ENCODE measurements at regions of chr10 and their contacts with region 1.

Region 1: DNA sequence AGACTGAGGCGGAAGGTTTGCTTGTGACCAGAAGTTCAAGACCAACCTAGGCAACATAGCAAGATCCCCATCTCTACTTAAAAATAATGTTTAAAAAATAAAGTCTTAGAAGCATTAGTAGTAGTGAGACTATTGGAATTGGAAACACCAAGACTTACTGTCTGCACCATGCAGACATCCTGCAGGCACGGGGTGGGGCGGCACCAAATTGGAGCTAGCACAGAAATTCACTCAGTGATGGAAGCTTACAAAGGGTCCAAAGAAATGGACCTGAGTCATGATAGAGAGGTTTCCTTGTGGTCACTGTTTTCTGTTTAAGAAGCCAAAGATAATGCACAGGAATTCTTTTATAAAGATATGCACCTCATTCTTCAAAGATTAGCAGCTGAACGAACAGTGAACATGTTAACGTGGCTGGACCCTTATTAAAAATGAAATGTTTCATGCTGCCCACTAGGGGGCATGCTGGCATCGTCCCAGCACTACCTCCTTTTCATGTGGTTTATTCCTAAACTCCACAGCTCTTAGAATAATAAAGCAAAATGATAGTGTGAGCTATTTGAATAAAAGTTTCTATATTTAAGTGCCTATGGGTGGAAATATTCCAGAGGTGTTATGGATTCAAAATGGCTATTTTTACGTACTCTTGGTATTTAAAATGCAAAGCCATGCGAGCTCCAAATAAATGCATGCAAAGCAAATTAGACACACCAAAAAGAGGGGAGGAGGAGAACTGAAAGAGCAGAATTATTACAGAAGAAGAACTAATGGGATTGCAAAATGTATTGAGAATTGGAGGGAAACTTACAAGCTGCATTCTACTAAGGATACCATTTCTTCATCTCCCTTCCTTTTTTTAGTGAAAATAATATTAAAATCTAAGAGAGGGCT is 28.6 kb downstream of the PDSS1 start:
- DNase-seq: peak in 31 of 35 experiments; percentile 12 to 75 (median 35)
- ATAC-seq: peak in 3 of 4 experiments; percentile 42 to 58 (median 52)
- H3K4me3 ChIP-seq: no peak overlapping the region
- H3K4me3 Mint-ChIP-seq: no peak overlapping the region
- H3K27ac ChIP-seq: no peak overlapping the region
- H3K27ac Mint-ChIP-seq: no peak overlapping the region
- H3K4me1 ChIP-seq: peaks cover 0 to 12% of the 10 kb centered on the region in 2 experiments
- H3K4me1 Mint-ChIP-seq: peaks cover 5 to 13% (median 13%) of the 10 kb centered on the region in 3 donors
- H3K27me3 ChIP-seq: no peaks in the 10 kb centered on the region
- H3K27me3 Mint-ChIP-seq: no peaks in the 10 kb centered on the region

Region 2: DNA sequence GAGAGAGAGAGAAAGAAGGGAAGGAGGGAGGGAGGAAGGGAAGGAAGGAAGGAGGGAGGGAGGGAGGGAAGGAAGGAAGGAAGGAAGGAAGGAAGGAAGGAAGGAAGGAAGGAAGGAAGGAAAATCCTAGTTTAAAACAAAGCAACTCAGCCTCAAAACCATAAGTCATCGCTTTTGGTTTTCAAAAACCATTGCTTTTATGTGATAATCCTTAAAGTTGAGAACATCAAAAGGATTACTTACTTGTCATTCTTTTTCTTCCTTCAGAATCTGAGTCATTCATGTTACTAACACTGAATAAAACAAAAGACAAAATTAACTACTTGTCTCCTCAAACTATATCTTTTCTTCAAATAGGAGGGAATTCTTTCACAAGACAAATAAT is 50.2 kb before region 1 on chr10:
- CTCF ChIA-PET with region 1: interaction called, 4 to 10 read pairs
- POLR2A ChIA-PET with region 1: no interaction called
- DNase-seq: no peak
- ATAC-seq: no peak
- H3K4me3 ChIP-seq: no peak overlapping the region
- H3K4me3 Mint-ChIP-seq: no peak overlapping the region
- H3K27ac ChIP-seq: no peak overlapping the region
- H3K27ac Mint-ChIP-seq: peak overlapping the region in 1 of 2 donors; percentile 22
- H3K4me1 ChIP-seq: no peaks in the 10 kb centered on the region
- H3K4me1 Mint-ChIP-seq: peaks cover 0 to 2% (median 0%) of the 10 kb centered on the region in 3 donors
- H3K27me3 ChIP-seq: peaks cover 0 to 3% of the 10 kb centered on the region in 2 experiments
- H3K27me3 Mint-ChIP-seq: peaks cover 0 to 2% of the 10 kb centered on the region in 2 donors

Region 3: GRCh38 chr10:26697163-26697921 is 28.7 kb before region 1 on chr10 and contains the start of gene PDSS1:
- CTCF ChIA-PET with region 1: interaction called in 1 of 2 experiments, 10 read pairs
- POLR2A ChIA-PET with region 1: no interaction called
- DNase-seq: peak; percentile 20 to 70 (median 43)
- ATAC-seq: peak; percentile 81 to 85 (median 84)
- H3K4me3 ChIP-seq: peak within 1 kb of the TSS; percentile 92 to 93
- H3K4me3 Mint-ChIP-seq: peak within 1 kb of the TSS; percentile 92 to 96 (median 95)
- H3K27ac ChIP-seq: peak within 1 kb of the TSS; percentile 72
- H3K27ac Mint-ChIP-seq: peak within 1 kb of the TSS; percentile 95 to 97
- H3K4me1 ChIP-seq: peaks cover 5 to 19% of the 10 kb centered on the region in 2 experiments
- H3K4me1 Mint-ChIP-seq: peaks cover 29 to 33% (median 31%) of the 10 kb centered on the region in 3 donors
- H3K27me3 ChIP-seq: no peaks in the 10 kb centered on the region
- H3K27me3 Mint-ChIP-seq: peaks cover 0 to 2% of the 10 kb centered on the region in 2 donors
- total RNA-seq, gene PDSS1: 2.1 to 6.2 (median 2.9) TPM

Region 4: GRCh38 chr10:26860443-26861204 is 134.5 kb after region 1 on chr10 and contains the start of gene ABI1:
- CTCF ChIA-PET with region 1: interaction called, 4 to 13 read pairs
- POLR2A ChIA-PET with region 1: no interaction called
- DNase-seq: peak; percentile 90 to 99 (median 97)
- ATAC-seq: peak; percentile 91 to 94 (median 92)
- H3K4me3 ChIP-seq: peak within 1 kb of the TSS; percentile 94 to 96
- H3K4me3 Mint-ChIP-seq: peak within 1 kb of the TSS; percentile 96 to 98 (median 98)
- H3K27ac ChIP-seq: peak within 1 kb of the TSS; percentile 82
- H3K27ac Mint-ChIP-seq: peak within 1 kb of the TSS; percentile 97 to 98
- H3K4me1 ChIP-seq: peaks cover 22 to 25% of the 10 kb centered on the region in 2 experiments
- H3K4me1 Mint-ChIP-seq: peaks cover 30 to 45% (median 43%) of the 10 kb centered on the region in 3 donors
- H3K27me3 ChIP-seq: peaks cover 0 to 12% of the 10 kb centered on the region in 2 experiments
- H3K27me3 Mint-ChIP-seq: peaks cover 4 to 7% of the 10 kb centered on the region in 2 donors
- total RNA-seq, gene ABI1: 51.9 to 78.8 (median 60.0) TPM

Region 5: GRCh38 chr10:26881600-26882331 is 155.7 kb after region 1 on chr10:
- CTCF ChIA-PET with region 1: interaction called, 29 to 58 read pairs
- POLR2A ChIA-PET with region 1: interaction called in 1 of 2 experiments, 3 read pairs
- DNase-seq: peak in 2 of 35 experiments; percentile 15 to 69
- ATAC-seq: peak; percentile 73 to 78 (median 76)
- H3K4me3 ChIP-seq: no peak overlapping the region
- H3K4me3 Mint-ChIP-seq: no peak overlapping the region
- H3K27ac ChIP-seq: no peak overlapping the region
- H3K27ac Mint-ChIP-seq: no peak overlapping the region
- H3K4me1 ChIP-seq: no peaks in the 10 kb centered on the region
- H3K4me1 Mint-ChIP-seq: peaks cover 0 to 3% (median 1%) of the 10 kb centered on the region in 3 donors
- H3K27me3 ChIP-seq: peaks cover 0 to 9% of the 10 kb centered on the region in 2 experiments
- H3K27me3 Mint-ChIP-seq: peaks cover 7 to 18% of the 10 kb centered on the region in 2 donors

Measured in T-cell (primary cell).